ENCODE measurements at regions of chr1 and their contacts with region 1.

Region 1: DNA sequence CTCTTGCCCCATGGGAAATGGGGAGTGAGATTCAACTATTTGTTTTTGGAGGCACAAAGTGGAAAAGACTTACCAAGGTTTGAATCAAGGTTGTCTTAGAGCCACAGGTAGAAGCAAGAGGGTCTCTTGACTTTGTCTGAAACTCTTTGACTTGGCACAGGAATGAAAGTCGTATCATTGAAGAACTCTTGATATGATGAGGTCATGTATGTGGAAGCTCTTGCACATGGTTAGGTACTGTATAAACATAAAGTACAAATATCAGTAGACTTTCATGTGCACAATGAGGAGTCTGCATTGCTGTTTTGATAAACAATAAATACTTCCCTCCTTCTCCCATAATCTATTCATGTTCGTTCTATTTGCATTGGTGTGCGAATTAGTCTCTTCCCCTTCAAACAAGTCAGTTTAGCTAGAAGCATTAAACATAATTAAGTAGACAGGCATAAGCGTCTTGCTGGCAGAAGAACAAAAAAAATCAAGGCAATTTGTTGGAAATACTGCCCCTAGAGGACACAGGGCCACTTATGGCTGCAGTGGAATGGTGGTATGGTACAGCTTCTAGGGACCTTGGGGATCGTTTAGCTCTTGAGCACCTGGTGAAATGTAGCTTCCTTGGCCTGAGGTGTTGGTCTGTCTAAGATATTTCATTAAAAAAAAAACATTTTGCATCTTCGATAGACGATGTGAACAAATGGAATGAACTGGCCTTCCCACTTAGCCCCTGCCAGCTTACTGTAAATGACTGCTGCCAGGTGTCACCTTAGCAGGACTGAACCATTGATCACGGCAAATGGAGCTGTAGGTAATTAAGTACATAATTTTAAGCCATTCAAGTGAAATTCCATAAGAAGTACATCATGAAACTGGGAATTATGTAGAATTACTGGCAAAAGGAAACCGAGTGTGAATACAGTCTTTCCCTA is 218.0 kb upstream of the GALNT2 start:
- DNase-seq: peak; percentile 69
- H3K4me3 Mint-ChIP-seq: no peak overlapping the region
- H3K27ac Mint-ChIP-seq: no peak overlapping the region
- H3K4me1 Mint-ChIP-seq: peaks cover 23% of the 10 kb centered on the region
- H3K27me3 Mint-ChIP-seq: no peaks in the 10 kb centered on the region
- CTCF ChIP-seq: peak; percentile 62

Region 2: DNA sequence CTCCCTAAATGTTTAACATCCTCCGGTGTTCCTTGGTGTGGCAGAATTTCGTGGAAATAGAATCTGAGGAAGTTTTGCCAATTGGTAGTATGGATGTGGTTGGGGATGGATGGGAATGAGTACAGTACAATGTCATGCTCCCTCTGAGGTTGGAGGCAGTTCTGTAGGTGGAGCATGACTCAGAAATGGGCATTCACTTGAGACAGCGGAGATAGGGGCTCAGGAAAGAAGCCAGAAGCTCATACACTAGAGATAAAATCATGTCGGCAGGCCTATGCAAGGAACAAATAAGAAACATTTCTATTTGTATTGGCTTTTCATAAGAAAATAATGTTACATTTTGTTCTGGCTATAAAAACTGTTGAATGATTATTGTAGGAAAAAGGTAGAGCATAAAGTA is 27.0 kb before region 1 on chr1:
- CTCF ChIA-PET with region 1: interaction called, 11 read pairs
- POLR2A ChIA-PET with region 1: interaction called, 3 read pairs
- intact Hi-C with region 1: no loop called
- DNase-seq: no peak
- H3K4me3 Mint-ChIP-seq: no peak overlapping the region
- H3K27ac Mint-ChIP-seq: no peak overlapping the region
- H3K4me1 Mint-ChIP-seq: peaks cover 12% of the 10 kb centered on the region
- H3K27me3 Mint-ChIP-seq: no peaks in the 10 kb centered on the region
- CTCF ChIP-seq: no peak

Region 3: GRCh38 chr1:229862017-229862774 is 13.2 kb after region 1 on chr1:
- CTCF ChIA-PET with region 1: interaction called, 14 read pairs
- POLR2A ChIA-PET with region 1: interaction called, 3 read pairs
- intact Hi-C with region 1: no loop called
- DNase-seq: no peak
- H3K4me3 Mint-ChIP-seq: no peak overlapping the region
- H3K27ac Mint-ChIP-seq: no peak overlapping the region
- H3K4me1 Mint-ChIP-seq: no peaks in the 10 kb centered on the region
- H3K27me3 Mint-ChIP-seq: no peaks in the 10 kb centered on the region
- CTCF ChIP-seq: no peak